Colonic mucosa (tissue), 4 donors: ENCODE measurements at regions of chr13 and their contacts with region 1.

Region 1: GRCh38 chr13:78121459-78122348 is 203.1 kb upstream of the EDNRB start:
- DNase-seq: peak; percentile 42
- H3K4me3 ChIP-seq: no peak overlapping the region
- H3K27ac ChIP-seq: no peak overlapping the region
- H3K4me1 ChIP-seq: no peaks in the 10 kb centered on the region
- H3K27me3 ChIP-seq: no peaks in the 10 kb centered on the region
- CTCF ChIP-seq: peak; percentile 83

Region 2: GRCh38 chr13:77779552-77780272 is 342.0 kb before region 1 on chr13:
- intact Hi-C with region 1: loop called (anchors 2 kb)
- DNase-seq: peak; percentile 26
- H3K4me3 ChIP-seq: no peak overlapping the region
- H3K27ac ChIP-seq: no peak overlapping the region
- H3K4me1 ChIP-seq: no peaks in the 10 kb centered on the region
- H3K27me3 ChIP-seq: no peaks in the 10 kb centered on the region
- CTCF ChIP-seq: peak; percentile 48